Panc1 (cell line): ENCODE measurements at regions of chr1 and their contacts with region 1.

Region 1: GRCh38 chr1:102726417-102726816 is 381.9 kb downstream of the COL11A1 start:
- DNase-seq: no peak
- ATAC-seq: no peak
- H3K4me3 ChIP-seq: no peak overlapping the region
- H3K27ac ChIP-seq: no peak overlapping the region
- H3K4me1 ChIP-seq: no peaks in the 10 kb centered on the region
- H3K27me3 ChIP-seq: no peaks in the 10 kb centered on the region
- CTCF ChIP-seq: no peak

Region 2: GRCh38 chr1:102842606-102843005 is 116.2 kb after region 1 on chr1:
- CTCF ChIA-PET with region 1: no interaction called
- POLR2A ChIA-PET with region 1: interaction called, 10 read pairs
- in situ Hi-C with region 1: no loop called
- intact Hi-C with region 1: no loop called
- DNase-seq: no peak
- ATAC-seq: no peak
- H3K4me3 ChIP-seq: no peak overlapping the region
- H3K27ac ChIP-seq: no peak overlapping the region
- H3K4me1 ChIP-seq: no peaks in the 10 kb centered on the region
- H3K27me3 ChIP-seq: no peaks in the 10 kb centered on the region
- CTCF ChIP-seq: no peak